Activated naive CD4-positive, alpha-beta T cell treated with anti-CD3 and anti-CD28 coated beads, Interleukin-2, amount 10 ng/mL, durations not matched to agents 7 days and 5 days (primary cell): ENCODE measurements at regions of chr1 and their contacts with region 1.

Region 1: GRCh38 chr1:110524311-110525251 is 5.6 kb upstream of the KCNA10 start:
- DNase-seq: peak; percentile 69
- H3K4me3 Mint-ChIP-seq: no peak overlapping the region
- H3K27ac Mint-ChIP-seq: no peak overlapping the region
- H3K4me1 Mint-ChIP-seq: no peaks in the 10 kb centered on the region
- H3K27me3 Mint-ChIP-seq: peaks cover 79% of the 10 kb centered on the region

Region 2: DNA sequence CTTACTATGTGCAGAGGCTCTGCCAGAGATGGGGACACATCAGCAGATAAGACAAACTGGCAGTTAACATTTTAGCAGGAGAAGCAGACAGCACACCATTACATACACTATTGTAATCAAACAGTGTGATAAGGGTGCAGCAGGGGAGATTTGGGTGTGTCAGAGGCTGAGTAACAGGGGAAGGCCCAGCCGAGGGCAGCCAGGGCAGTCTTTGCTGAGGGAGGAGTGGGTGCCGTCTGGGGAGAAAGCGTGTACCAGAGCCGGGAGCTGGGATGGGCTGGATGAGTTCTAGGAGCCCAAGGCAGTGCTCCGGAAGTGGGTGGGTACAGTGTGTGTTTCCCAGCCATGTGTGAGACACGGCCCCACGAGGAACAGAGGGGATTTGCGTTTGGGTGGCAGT is 36.9 kb before region 1 on chr1:
- CTCF ChIA-PET with region 1: no interaction called
- DNase-seq: no peak
- H3K4me3 Mint-ChIP-seq: no peak overlapping the region
- H3K27ac Mint-ChIP-seq: no peak overlapping the region
- H3K4me1 Mint-ChIP-seq: no peaks in the 10 kb centered on the region
- H3K27me3 Mint-ChIP-seq: peaks cover 32% of the 10 kb centered on the region

Region 3: DNA sequence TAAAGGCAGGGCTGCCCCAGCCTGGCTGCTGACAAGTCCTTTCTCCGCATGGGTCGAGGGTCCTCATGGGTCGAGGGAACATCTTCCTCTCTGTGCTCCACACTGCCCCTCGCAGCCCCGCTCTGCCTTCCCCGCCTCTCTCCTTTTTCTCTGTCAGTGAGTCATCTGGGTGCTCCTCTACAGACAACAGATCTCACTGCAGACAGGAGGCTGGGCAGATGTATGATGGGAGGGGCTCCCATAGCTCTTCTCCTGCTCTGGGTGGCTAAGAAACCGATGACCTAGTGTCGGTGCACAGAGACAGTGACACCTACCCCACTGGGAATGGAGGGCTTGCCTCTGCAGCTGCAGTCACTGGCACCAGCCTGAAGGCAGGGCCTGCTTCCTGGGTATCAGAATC is 11.1 kb before region 1 on chr1:
- CTCF ChIA-PET with region 1: no interaction called
- DNase-seq: no peak
- H3K4me3 Mint-ChIP-seq: no peak overlapping the region
- H3K27ac Mint-ChIP-seq: no peak overlapping the region
- H3K4me1 Mint-ChIP-seq: no peaks in the 10 kb centered on the region
- H3K27me3 Mint-ChIP-seq: peaks cover 24% of the 10 kb centered on the region

Region 4: GRCh38 chr1:110535985-110536384 is 11.4 kb after region 1 on chr1:
- CTCF ChIA-PET with region 1: interaction called, 13 read pairs
- DNase-seq: no peak
- H3K4me3 Mint-ChIP-seq: no peak overlapping the region
- H3K27ac Mint-ChIP-seq: no peak overlapping the region
- H3K4me1 Mint-ChIP-seq: no peaks in the 10 kb centered on the region
- H3K27me3 Mint-ChIP-seq: peaks cover 54% of the 10 kb centered on the region

Region 5: GRCh38 chr1:110605901-110606656 is 81.5 kb after region 1 on chr1 and contains the start of gene KCNA2:
- CTCF ChIA-PET with region 1: interaction called, 10 read pairs
- DNase-seq: peak; percentile 43
- H3K4me3 Mint-ChIP-seq: peak within 1 kb of the TSS; percentile 69
- H3K27ac Mint-ChIP-seq: peak within 1 kb of the TSS; percentile 73
- H3K4me1 Mint-ChIP-seq: peaks cover 32% of the 10 kb centered on the region
- H3K27me3 Mint-ChIP-seq: peaks cover 73% of the 10 kb centered on the region

Region 6: GRCh38 chr1:110714374-110714995 is 189.9 kb after region 1 on chr1:
- CTCF ChIA-PET with region 1: no interaction called
- DNase-seq: no peak
- H3K4me3 Mint-ChIP-seq: no peak overlapping the region
- H3K27ac Mint-ChIP-seq: no peak overlapping the region
- H3K4me1 Mint-ChIP-seq: peaks cover 23% of the 10 kb centered on the region
- H3K27me3 Mint-ChIP-seq: peaks cover 14% of the 10 kb centered on the region